ENCODE measurements at regions of chr3 and their contacts with region 1.

Region 1: GRCh38 chr3:170357176-170357919 is at the start of gene SKIL:
- DNase-seq: peak; percentile 98
- H3K4me3 ChIP-seq: peak within 1 kb of the TSS; percentile 96
- H3K27ac ChIP-seq: peak within 1 kb of the TSS; percentile 96
- H3K4me1 ChIP-seq: peaks cover 33% of the 10 kb centered on the region
- H3K27me3 ChIP-seq: no peaks in the 10 kb centered on the region
- CTCF ChIP-seq: no peak
- total RNA-seq, gene SKIL: 43.2 and 47.9 TPM in 2 replicates

Region 2: DNA sequence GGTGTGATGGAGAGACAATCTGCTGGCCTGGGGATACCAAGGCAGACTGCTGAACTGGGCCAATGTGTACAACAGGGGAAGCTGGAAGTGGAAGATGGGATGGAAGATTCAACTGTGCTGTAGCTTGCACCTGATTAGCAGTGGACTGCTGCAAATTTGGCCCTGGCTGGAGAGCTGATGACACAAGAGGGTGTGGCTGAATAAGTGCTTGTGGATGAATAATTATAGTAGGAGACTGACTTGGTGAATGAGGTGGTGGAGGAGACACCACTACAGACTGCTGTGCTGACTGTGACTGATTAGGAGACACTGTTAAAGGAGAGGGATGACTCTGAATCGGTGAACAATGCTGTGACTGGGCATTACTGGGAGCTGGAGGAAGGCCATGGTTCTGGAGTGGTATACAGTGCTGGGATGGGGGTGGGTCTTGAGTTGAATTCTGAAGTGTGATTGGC is 228.3 kb before region 1 on chr3:
- CTCF ChIA-PET with region 1: no interaction called
- POLR2A ChIA-PET with region 1: no interaction called
- intact Hi-C with region 1: no loop called
- DNase-seq: peak; percentile 24
- H3K4me3 ChIP-seq: no peak overlapping the region
- H3K27ac ChIP-seq: peak overlapping the region; percentile 61
- H3K4me1 ChIP-seq: peaks cover 33% of the 10 kb centered on the region
- H3K27me3 ChIP-seq: no peaks in the 10 kb centered on the region
- CTCF ChIP-seq: no peak

Region 3: DNA sequence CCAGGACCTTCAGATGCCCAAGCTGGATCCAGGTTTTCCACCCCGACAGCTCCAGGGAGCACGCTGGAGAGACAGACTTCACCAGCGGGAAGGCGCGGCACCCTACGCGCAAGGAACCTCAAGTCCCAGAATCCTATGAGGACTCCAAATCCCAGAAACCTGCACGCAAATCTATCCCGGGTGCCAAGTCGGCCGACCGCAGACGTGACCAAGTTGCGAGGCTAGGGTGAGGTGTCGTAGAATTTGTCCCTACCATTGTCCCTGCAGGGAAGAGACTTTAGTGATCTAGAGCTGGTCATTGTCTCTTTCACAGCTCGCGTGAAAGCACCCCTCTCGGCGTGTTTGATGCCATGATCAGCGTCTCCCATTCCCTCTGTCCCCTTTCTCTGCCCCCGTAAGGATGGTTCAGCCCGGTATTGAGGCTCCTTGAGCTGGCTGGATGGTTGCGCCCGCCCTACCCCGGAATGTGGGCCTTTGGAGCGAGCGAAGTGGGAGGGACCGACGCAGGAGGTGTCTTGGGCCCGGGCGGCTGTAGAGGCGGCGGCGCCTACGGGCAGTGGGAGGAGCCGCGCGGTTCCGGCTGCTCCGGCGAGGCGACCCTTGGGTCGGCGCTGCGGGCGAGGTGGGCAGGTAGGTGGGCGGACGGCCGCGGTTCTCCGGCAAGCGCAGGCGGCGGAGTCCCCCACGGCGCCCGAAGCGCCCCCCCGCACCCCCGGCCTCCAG is 135.3 kb before region 1 on chr3 and contains the start of gene PRKCI:
- CTCF ChIA-PET with region 1: no interaction called
- POLR2A ChIA-PET with region 1: no interaction called
- intact Hi-C with region 1: loop called (anchors 5 kb)
- DNase-seq: peak; percentile 99
- H3K4me3 ChIP-seq: peak within 1 kb of the TSS; percentile 95
- H3K27ac ChIP-seq: peak within 1 kb of the TSS; percentile 99
- H3K4me1 ChIP-seq: peaks cover 26% of the 10 kb centered on the region
- H3K27me3 ChIP-seq: no peaks in the 10 kb centered on the region
- CTCF ChIP-seq: no peak
- total RNA-seq, gene PRKCI: 44.7 and 48.2 TPM in 2 replicates

Region 4: GRCh38 chr3:170458285-170458684 is 100.9 kb after region 1 on chr3:
- CTCF ChIA-PET with region 1: no interaction called
- POLR2A ChIA-PET with region 1: no interaction called
- intact Hi-C with region 1: no loop called
- DNase-seq: no peak
- H3K4me3 ChIP-seq: no peak overlapping the region
- H3K27ac ChIP-seq: no peak overlapping the region
- H3K4me1 ChIP-seq: no peaks in the 10 kb centered on the region
- H3K27me3 ChIP-seq: peaks cover 13% of the 10 kb centered on the region
- CTCF ChIP-seq: no peak

Region 5: DNA sequence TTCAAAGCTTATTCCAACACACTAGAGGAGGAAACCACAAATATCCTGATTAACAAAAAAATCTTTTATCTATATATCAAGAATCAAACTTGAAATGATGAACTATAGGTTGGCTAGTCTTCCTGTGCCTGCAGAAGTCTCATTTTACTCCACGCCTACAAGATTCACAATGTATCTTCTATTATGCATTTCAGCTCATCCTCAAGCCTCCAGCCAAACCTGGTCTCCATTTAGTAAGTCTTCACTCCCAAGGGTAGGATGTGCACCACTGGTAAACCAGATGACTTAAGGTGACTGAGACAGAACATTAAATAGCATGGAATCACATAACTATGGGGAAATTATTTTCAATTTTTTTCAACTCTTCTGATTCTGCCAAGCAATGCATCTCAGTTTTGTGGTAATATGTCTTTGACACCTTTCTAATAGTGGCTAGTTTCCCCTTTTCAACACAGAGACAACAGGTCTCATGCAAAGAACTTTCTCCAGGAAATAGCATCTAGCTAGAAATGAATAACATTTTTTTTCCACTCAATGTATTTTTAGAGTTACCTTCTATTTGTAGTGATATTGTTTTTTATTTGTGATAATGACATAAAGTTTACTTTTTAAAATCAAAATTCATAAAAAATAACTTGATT is 935.9 kb after region 1 on chr3:
- CTCF ChIA-PET with region 1: no interaction called
- POLR2A ChIA-PET with region 1: no interaction called
- intact Hi-C with region 1: no loop called
- DNase-seq: no peak
- H3K4me3 ChIP-seq: no peak overlapping the region
- H3K27ac ChIP-seq: no peak overlapping the region
- H3K4me1 ChIP-seq: no peaks in the 10 kb centered on the region
- H3K27me3 ChIP-seq: no peaks in the 10 kb centered on the region
- CTCF ChIP-seq: no peak

Measured in A673 (cell line).